Right ventricle myocardium inferior (tissue), 1 donor: ENCODE measurements at regions of chr22 and their contacts with region 1.

Region 1: DNA sequence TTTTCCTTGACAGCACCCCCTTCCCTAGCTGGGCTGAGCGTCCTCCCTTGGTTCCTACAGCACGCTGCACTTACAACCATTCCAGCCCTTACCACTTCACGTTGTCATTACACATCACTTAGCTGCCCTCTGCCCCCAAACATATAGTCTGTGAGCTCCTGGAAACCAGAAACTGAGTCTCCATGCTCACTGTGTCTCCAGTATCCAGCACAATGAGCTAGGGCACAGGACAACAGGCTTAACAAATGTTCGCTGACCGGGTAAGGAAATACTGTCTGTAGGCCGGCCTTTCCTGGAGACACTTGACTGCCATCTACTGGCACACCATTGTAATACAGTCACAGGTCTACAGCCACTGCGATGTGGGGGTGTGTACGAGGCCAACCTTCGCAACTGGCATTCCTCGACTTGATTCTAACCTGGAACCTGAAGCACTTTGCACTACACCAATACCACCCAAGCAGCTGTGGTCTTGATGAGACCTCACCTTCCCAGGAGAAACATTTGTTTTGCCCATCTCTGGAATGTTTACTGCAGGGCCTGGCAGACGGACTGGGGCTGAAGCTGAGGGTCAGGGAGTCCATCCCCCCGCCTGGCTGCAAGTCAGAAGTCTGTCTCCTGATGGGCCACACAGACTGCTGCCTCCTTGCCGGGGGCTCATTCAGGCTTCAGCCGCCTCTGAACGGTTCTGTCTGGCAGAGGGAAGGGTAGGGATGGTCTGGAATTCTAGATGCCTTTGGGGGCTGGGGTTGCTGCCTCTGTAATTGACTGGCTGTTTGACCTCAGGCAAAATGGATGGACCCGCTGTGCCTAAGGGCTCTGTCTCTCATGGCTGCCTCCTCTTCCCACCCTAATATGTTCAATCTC is 72.0 kb downstream of the SYN3 start:
- DNase-seq: no peak
- ATAC-seq: peak; percentile 96

Region 2: GRCh38 chr22:32796865-32797573 is 189.1 kb before region 1 on chr22:
- intact Hi-C with region 1: loop called (anchors 2 kb)
- DNase-seq: peak; percentile 87
- ATAC-seq: peak; percentile 59

Region 3: GRCh38 chr22:32839831-32840584 is 146.1 kb before region 1 on chr22:
- intact Hi-C with region 1: loop called (anchors 10 kb)
- DNase-seq: no peak
- ATAC-seq: peak; percentile 47

Region 4: GRCh38 chr22:32926600-32926999 is 59.5 kb before region 1 on chr22:
- intact Hi-C with region 1: loop called (anchors 2 kb)
- DNase-seq: no peak
- ATAC-seq: no peak

Region 5: DNA sequence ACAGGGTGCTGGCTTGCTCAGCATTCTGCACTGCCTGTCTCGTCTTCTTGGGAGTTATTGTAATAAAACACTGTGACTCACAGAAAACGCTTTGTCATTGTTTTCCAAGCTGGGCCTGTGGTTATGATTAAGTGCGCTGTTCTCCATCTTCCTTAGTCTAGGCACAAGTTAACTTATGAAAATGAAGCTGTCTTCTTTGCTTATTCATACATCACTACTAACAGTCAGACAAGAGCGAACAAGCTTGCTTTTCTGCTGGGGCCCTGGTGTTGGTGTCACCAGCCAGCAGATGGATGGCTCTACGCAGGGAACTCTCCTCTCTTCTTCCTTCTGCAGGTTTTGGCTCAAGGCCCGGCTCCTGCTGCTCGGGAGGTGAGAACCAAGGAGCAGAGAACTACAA is 452.1 kb after region 1 on chr22:
- intact Hi-C with region 1: no loop called
- DNase-seq: no peak
- ATAC-seq: no peak